WTC11 (cell line): ENCODE measurements at regions of chr18 and their contacts with region 1.

Region 1: GRCh38 chr18:32771169-32771751 is 1.6 kb downstream of the KLHL14 start:
- DNase-seq: peak; percentile 52
- ATAC-seq: peak; percentile 16
- H3K4me3 Mint-ChIP-seq: peak overlapping the region; percentile 93
- H3K27ac Mint-ChIP-seq: 0 out of 2 replicates have a peak overlapping the region, but pooled peaks have one; percentile 32
- H3K4me1 Mint-ChIP-seq: peaks cover 55% of the 10 kb centered on the region
- H3K27me3 Mint-ChIP-seq: peaks cover 56% of the 10 kb centered on the region
- CTCF ChIP-seq: no peak

Region 2: DNA sequence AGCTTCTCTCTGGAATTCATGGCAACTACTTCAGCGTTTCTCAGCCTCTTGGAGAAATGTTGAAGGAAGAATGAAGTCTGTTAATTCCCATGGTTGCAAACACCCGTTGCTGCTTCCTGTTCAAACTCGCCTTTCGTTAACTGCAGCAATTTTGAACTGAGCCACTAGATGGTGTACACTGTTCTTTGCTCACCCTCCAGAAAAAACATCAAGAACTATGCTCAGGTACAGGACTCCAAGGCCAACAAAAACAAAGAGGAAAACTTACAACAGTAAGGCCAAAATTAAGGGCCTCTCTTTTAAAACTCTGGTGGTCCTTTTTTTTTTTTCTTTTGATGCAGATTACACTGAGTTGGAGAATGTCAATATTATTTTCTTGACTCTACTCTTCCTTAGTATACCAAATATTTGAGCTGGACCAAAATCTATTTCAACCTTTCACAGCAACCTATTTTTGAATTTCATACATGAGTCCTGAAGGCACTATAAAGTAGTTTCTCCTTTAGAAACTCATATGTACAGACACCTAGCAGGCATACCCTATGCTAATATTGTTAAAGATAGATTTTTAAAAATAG is 56.6 kb before region 1 on chr18:
- CTCF ChIA-PET with region 1: interaction called, 14 read pairs
- POLR2A ChIA-PET with region 1: no interaction called
- DNase-seq: peak; percentile 37
- ATAC-seq: peak; percentile 97
- H3K4me3 Mint-ChIP-seq: no peak overlapping the region
- H3K27ac Mint-ChIP-seq: no peak overlapping the region
- H3K4me1 Mint-ChIP-seq: peaks cover 8% of the 10 kb centered on the region
- H3K27me3 Mint-ChIP-seq: no peaks in the 10 kb centered on the region
- CTCF ChIP-seq: peak; percentile 57

Region 3: DNA sequence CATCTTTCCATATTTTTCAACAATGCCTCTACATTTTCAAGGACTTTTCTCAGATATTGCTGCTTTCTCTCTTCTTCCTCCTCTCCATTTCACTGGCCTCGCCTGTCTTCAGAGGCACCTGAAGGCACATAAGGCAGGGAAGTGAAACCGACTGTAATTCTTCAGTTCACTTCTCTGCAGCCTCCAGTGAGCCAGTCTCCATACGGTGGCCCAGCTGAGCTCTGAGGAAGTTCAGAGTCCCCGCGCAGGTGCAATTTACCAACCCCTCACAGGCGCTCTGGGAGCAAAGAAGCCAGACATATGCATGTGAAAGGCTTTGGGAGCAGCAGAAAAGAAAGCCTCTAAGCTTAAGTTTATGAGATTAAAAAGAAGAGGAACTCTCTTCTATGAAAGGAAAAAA is 10.9 kb before region 1 on chr18:
- CTCF ChIA-PET with region 1: interaction called, 12 read pairs
- POLR2A ChIA-PET with region 1: interaction called, 11 read pairs
- DNase-seq: peak; percentile 63
- ATAC-seq: peak; percentile 99
- H3K4me3 Mint-ChIP-seq: peak overlapping the region; percentile 47
- H3K27ac Mint-ChIP-seq: peak overlapping the region; percentile 93
- H3K4me1 Mint-ChIP-seq: peaks cover 65% of the 10 kb centered on the region
- H3K27me3 Mint-ChIP-seq: no peaks in the 10 kb centered on the region
- CTCF ChIP-seq: no peak

Region 4: DNA sequence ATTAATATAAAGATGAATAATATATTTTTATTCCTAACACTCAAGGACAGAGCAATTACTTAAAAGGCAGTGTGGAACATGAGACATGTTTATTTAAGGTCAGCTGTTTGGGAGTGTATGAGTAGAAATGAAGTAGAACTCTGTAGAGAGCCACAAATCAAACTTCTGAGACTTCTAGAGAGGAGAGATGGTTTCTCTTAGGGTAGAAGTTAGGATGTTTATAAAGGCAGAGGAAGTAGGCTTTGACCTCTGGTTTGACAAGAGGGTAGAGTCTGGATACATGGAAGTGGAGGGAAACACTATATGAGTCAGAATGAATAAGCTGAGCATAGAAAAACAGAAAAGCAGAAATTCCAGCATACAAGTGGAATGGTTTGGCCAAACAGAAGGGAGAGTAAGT is 263.7 kb after region 1 on chr18:
- CTCF ChIA-PET with region 1: no interaction called
- POLR2A ChIA-PET with region 1: no interaction called
- DNase-seq: no peak
- ATAC-seq: no peak
- H3K4me3 Mint-ChIP-seq: no peak overlapping the region
- H3K27ac Mint-ChIP-seq: no peak overlapping the region
- H3K4me1 Mint-ChIP-seq: no peaks in the 10 kb centered on the region
- H3K27me3 Mint-ChIP-seq: no peaks in the 10 kb centered on the region
- CTCF ChIP-seq: no peak